Transverse colon (tissue), 4 donors: ENCODE measurements at regions of chr9 and their contacts with region 1.

Region 1: GRCh38 chr9:75890472-75891276 is at the start of gene PCSK5:
- DNase-seq: peak; percentile 94
- H3K4me3 ChIP-seq: peak within 1 kb of the TSS; percentile 83 to 93 (median 90)
- H3K27ac ChIP-seq: peak within 1 kb of the TSS; percentile 92 to 97 (median 95)
- H3K4me1 ChIP-seq: peaks cover 3 to 41% (median 19%) of the 10 kb centered on the region in 4 donors
- H3K27me3 ChIP-seq: no peaks in the 10 kb centered on the region
- CTCF ChIP-seq: peak in 3 of 5 experiments; percentile 20 to 41 (median 35)
- EP300 ChIP-seq: no peak
- POLR2A ChIP-seq: peak; percentile 96
- total RNA-seq, gene PCSK5: 110 to 248 (median 127) TPM

Region 2: DNA sequence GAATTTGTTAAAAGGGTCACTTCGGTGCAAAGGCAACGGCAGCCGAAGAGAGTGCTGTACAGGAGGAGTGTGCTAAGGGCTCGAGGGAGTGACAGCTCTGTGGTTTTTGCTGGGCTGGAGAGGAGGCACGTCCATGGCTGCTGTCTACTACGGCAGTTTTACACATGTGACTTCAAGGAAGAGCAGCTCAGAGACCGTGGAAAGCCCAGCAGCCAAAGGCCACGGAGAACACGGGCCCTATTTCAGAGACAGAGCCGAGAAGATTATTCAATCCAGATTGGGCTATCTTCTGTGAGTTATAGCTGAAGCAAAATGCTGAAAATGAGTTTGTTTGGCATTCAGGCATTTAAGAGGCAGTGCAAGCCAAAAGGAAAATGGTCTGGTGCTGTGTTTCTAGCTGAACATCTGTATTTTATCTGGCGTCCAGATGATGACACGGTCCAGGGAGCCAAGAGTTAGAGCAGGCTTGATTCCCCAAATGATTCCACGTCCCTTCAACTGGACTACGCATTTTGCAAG is 407.1 kb after region 1 on chr9:
- in situ Hi-C with region 1: loop called in 3 of 4 experiments (anchors 25 kb)
- intact Hi-C with region 1: no loop called
- DNase-seq: no peak
- H3K4me3 ChIP-seq: no peak overlapping the region
- H3K27ac ChIP-seq: peak overlapping the region; percentile 39 to 61 (median 52)
- H3K4me1 ChIP-seq: peaks cover 0 to 9% (median 5%) of the 10 kb centered on the region in 4 donors
- H3K27me3 ChIP-seq: no peaks in the 10 kb centered on the region
- CTCF ChIP-seq: no peak
- EP300 ChIP-seq: no peak
- POLR2A ChIP-seq: no peak